AG04450 (cell line): ENCODE measurements at regions of chr22 and their contacts with region 1.

Region 1: DNA sequence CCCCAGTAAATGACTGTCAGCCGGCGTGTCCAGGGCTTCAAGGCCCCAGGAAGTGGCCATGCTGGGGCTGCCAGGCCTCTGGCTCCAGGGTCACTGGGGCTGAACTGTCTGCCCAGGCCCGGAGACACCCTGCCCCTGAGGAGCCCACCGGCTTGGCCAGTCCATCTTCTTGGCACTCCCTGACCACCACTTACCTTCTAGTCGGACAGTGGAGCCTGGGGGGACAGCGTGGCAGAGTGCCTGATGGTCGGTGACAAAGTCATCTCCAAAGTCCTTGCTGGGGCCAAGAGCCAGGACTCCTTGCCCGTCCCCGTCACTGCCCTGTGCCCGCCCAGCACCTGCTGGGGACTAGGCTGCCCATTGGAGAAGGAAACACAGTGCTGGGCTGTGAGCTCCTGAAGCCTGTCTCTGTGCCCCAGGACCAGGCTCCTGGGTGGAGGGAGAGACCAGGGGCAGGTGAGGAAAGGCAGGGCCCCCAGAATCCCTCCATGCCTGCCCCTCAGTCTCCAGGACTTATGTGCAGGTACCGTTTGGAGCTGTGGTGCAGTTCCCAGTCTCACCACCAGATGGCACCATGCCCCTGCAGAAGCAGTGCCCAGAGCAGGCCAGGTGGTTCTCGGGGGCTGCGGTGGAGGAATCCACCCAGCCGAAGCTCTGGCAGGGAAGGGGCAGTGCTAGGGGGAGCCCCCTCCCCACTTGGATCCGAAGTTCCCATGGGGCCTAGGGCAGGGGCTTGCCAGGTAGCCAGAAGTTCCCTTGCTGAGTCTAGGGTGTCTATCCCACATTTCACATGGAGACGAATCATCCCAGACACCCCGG is 6.0 kb upstream of the CCDC188 start:
- DNase-seq: peak; percentile 26
- H3K4me3 ChIP-seq: no peak overlapping the region
- H3K27ac ChIP-seq: no peak overlapping the region
- H3K27me3 ChIP-seq: peaks cover 10% of the 10 kb centered on the region
- CTCF ChIP-seq: peak; percentile 98

Region 2: DNA sequence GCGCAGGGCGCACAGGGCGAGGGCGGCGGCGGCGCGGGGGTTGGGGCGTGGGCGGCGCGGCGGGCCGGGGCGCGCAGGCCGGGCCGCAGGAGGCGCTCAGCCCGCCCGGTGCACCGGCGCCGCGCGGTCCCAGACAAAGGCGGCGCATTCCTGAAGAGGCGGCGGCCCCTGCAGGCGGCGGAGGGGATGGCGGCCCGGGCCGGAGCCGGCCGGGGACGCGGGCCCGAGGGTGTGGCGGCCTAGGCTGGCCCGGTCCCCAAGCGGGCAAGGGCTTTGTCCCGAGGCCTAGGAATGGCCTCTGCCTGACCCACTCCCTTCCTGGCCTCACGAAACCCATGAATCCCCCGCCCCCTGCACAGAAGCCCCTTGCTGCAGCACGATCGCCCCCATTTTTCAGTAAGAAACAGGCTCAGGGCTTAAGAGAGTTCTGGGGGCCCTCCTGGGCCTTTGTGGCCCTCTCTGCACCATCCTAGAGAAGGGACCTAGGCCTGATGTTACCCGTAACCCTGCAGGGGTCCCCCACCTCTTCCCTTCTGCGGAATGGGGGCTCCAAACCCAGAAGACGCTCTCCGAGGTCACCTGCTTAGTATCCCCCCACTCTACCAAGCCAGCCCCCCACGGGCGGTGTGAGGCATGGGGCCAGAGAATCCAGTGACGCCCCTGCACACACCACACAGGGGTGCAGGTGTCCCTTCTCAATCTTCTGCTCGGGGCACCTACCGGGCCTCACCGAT is 111.6 kb after region 1 on chr22 and contains the start of gene RTN4R:
- CTCF ChIA-PET with region 1: interaction called, 10 read pairs
- POLR2A ChIA-PET with region 1: no interaction called
- DNase-seq: no peak
- H3K4me3 ChIP-seq: peak within 1 kb of the TSS; percentile 22; the same call in 1 of the 2 replicates
- H3K27ac ChIP-seq: no peak within 1 kb of the TSS
- H3K27me3 ChIP-seq: peaks cover 13% of the 10 kb centered on the region
- CTCF ChIP-seq: peak; percentile 51
- polyA plus RNA-seq, gene RTN4R: 0.16 and 0.38 TPM in 2 replicates

Region 3: DNA sequence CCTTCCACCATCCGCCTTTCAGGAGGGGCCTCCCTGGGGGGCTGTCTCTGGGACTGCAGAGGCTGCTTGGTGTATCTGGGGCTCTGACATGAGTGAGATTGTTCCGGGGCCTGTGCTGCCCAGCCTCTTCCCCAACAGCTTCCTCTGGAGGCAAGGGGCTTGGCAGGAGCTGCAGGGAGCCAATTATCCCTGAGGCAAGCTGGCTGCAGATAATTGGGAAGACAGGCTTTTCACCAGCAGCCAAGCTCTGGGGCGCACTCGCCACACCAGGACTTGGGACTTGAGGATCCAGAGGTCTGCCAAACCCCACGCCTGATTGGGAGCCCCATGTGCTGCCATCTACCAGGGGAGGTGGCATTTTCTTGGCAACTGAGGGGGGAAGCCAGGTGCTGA is 126.8 kb after region 1 on chr22:
- CTCF ChIA-PET with region 1: interaction called, 38 read pairs
- POLR2A ChIA-PET with region 1: no interaction called
- DNase-seq: no peak
- H3K4me3 ChIP-seq: no peak overlapping the region
- H3K27ac ChIP-seq: no peak overlapping the region
- H3K27me3 ChIP-seq: no peaks in the 10 kb centered on the region
- CTCF ChIP-seq: no peak